ENCODE measurements at regions of chr1 and their contacts with region 1.

Region 1: GRCh38 chr1:58515794-58516401 is 30.6 kb downstream of the OMA1 start:
- DNase-seq: peak in 1 of 3 donors; percentile 16
- ATAC-seq: peak; percentile 47 to 63
- H3K4me3 ChIP-seq: no peak overlapping the region
- H3K27ac ChIP-seq: no peak overlapping the region
- H3K4me1 ChIP-seq: no peaks in the 10 kb centered on the region
- H3K27me3 ChIP-seq: no peaks in the 10 kb centered on the region

Region 2: GRCh38 chr1:58652651-58653184 is 136.8 kb after region 1 on chr1:
- intact Hi-C with region 1: loop called (anchors 2 to 5 kb)
- DNase-seq: peak in 1 of 3 donors; percentile 30
- ATAC-seq: peak; percentile 85 to 86
- H3K4me3 ChIP-seq: no peak overlapping the region
- H3K27ac ChIP-seq: no peak overlapping the region
- H3K4me1 ChIP-seq: no peaks in the 10 kb centered on the region
- H3K27me3 ChIP-seq: no peaks in the 10 kb centered on the region

Measured in right cardiac atrium (tissue), 5 donors.